GM12878 (cell line): ENCODE measurements at regions of chr19 and their contacts with region 1.

Region 1: DNA sequence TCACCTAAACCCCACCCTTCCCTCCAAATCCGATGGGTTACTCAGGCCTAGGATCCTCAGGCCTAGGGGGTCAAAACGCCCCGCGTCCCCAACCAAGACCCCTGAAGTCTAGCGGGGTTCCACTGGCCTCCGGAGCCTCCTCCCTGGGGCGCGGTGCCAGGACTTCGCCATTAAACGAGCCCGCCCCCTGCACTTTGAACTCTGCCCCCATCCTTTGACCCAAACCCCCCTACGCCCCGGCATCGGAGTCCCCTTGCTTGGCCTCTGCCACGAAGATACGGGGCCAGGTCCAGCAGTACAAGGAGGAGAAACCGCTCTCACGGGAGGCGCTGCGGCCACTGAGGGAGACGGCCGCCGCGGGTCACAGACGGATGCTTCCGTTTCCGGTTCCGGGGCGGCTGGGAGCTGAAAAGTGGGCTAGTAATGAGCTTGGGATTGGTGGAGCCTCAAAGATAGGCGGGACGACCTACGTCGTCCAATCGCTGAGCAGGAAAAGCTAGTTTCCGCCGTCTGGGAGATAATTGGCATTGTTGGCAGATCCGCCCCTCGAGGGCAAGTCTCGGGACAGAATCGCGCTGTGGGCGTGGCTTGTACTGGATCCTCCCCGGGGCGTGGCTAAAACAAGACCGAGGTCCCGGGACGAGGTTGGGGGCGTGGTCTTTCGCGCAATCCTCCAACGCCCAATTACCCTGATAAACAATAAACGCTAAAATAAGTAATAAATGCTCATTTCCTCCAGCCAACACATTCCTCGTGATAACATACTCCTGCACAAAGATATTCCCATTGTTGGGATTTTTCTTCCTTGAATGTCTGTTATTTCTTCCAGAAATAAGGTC is 5.7 kb upstream of the ZNF77 start:
- DNase-seq: peak; percentile 99
- ATAC-seq: peak; percentile 99
- H3K4me3 ChIP-seq: peak overlapping the region; percentile 83
- H3K27ac ChIP-seq: peak overlapping the region; percentile 85
- H3K4me1 ChIP-seq: peaks cover 3% of the 10 kb centered on the region
- H3K27me3 ChIP-seq: no peaks in the 10 kb centered on the region
- CTCF ChIP-seq: no peak
- EP300 ChIP-seq: no peak
- POLR2A ChIP-seq: peak; percentile 97
- RAD21 ChIP-seq: no peak

Region 2: GRCh38 chr19:2887391-2887914 is 63.1 kb before region 1 on chr19:
- CTCF ChIA-PET with region 1: interaction called, 29 read pairs
- POLR2A ChIA-PET with region 1: no interaction called
- RAD21 ChIA-PET with region 1: interaction called, 7 read pairs
- SMC1A ChIA-PET with region 1: interaction called, 9 read pairs
- in situ Hi-C with region 1: no loop called
- intact Hi-C with region 1: loop called (anchors 10 kb)
- DNase-seq: no peak
- ATAC-seq: peak; percentile 89
- H3K4me3 ChIP-seq: no peak overlapping the region
- H3K27ac ChIP-seq: no peak overlapping the region
- H3K4me1 ChIP-seq: peaks cover 3% of the 10 kb centered on the region; the same call in 1 of the 2 replicates
- H3K27me3 ChIP-seq: no peaks in the 10 kb centered on the region
- CTCF ChIP-seq: peak; percentile 61 to 65 (median 61)
- EP300 ChIP-seq: no peak
- POLR2A ChIP-seq: no peak
- RAD21 ChIP-seq: peak; percentile 60

Region 3: GRCh38 chr19:2969104-2969504 is 18.6 kb after region 1 on chr19:
- CTCF ChIA-PET with region 1: interaction called, 32 read pairs
- POLR2A ChIA-PET with region 1: no interaction called
- RAD21 ChIA-PET with region 1: interaction called, 4 read pairs
- SMC1A ChIA-PET with region 1: no interaction called
- in situ Hi-C with region 1: no loop called
- intact Hi-C with region 1: no loop called
- DNase-seq: no peak
- ATAC-seq: no peak
- H3K4me3 ChIP-seq: no peak overlapping the region
- H3K27ac ChIP-seq: no peak overlapping the region
- H3K4me1 ChIP-seq: peaks cover 4% of the 10 kb centered on the region; the same call in 1 of the 2 replicates
- H3K27me3 ChIP-seq: no peaks in the 10 kb centered on the region; a peak in 1 of 4 replicates
- CTCF ChIP-seq: no peak
- EP300 ChIP-seq: no peak
- POLR2A ChIP-seq: no peak
- RAD21 ChIP-seq: no peak

Region 4: DNA sequence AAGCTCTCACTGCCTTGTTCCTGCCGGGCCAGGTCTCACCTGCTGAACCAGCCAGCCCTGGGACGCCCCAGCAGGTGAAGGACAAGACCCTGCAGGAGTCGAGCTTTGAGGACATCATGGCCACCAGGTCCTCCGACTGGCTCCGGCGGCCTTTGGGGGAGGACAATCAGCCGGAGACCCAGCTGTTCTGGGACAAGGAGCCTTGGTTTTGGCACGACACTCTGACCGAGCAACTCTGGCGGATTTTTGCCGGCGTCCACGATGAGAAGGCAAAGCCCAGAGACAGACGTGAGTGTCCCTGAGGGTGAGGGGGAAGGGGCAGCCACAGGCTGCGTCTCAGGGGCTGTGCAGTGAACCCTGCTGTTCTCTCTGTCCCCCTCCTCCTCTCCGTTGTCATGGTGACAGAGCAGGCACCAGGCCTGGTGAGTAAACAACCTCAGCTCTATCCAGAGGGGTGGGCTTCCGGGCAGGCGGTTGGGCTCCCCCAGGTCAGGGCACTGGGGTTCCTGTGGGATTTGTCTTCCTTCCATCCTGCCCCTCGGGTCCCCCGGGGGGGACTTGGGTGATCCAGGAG is 36.5 kb after region 1 on chr19:
- CTCF ChIA-PET with region 1: no interaction called
- POLR2A ChIA-PET with region 1: no interaction called
- RAD21 ChIA-PET with region 1: no interaction called
- SMC1A ChIA-PET with region 1: no interaction called
- in situ Hi-C with region 1: no loop called
- intact Hi-C with region 1: no loop called
- DNase-seq: no peak
- ATAC-seq: no peak
- H3K4me3 ChIP-seq: no peak overlapping the region
- H3K27ac ChIP-seq: no peak overlapping the region
- H3K4me1 ChIP-seq: peaks cover 6% of the 10 kb centered on the region; the same call in 1 of the 2 replicates
- H3K27me3 ChIP-seq: no peaks in the 10 kb centered on the region; a peak in 2 of 4 replicates
- CTCF ChIP-seq: no peak
- EP300 ChIP-seq: no peak
- POLR2A ChIP-seq: no peak
- RAD21 ChIP-seq: no peak

Region 5: DNA sequence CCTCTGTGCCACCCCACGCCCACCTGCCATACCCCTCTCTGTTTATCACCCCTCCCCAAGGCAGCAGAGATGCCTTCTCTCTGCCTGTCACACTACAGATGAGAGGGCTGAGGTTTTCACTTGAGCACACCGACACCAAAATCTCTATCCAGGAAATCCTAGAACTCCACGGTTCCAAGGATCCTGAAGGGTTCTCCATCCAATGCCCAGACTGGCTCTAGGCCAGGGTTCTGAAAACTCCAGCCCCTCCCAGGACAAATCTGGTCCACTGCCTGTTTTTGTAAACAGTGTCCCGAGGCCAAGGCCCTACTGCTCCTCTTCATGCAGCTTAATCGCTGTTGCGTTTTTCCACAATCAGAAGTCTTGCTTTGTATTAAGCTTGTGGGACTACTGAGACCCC is 58.5 kb after region 1 on chr19:
- CTCF ChIA-PET with region 1: no interaction called
- POLR2A ChIA-PET with region 1: no interaction called
- RAD21 ChIA-PET with region 1: no interaction called
- SMC1A ChIA-PET with region 1: no interaction called
- in situ Hi-C with region 1: no loop called
- intact Hi-C with region 1: no loop called
- DNase-seq: no peak
- ATAC-seq: no peak
- H3K4me3 ChIP-seq: no peak overlapping the region
- H3K27ac ChIP-seq: no peak overlapping the region
- H3K4me1 ChIP-seq: no peaks in the 10 kb centered on the region; the same call in none of the 2 replicates
- H3K27me3 ChIP-seq: no peaks in the 10 kb centered on the region; a peak in 1 of 4 replicates
- CTCF ChIP-seq: no peak
- EP300 ChIP-seq: no peak
- POLR2A ChIP-seq: no peak
- RAD21 ChIP-seq: no peak

Region 6: DNA sequence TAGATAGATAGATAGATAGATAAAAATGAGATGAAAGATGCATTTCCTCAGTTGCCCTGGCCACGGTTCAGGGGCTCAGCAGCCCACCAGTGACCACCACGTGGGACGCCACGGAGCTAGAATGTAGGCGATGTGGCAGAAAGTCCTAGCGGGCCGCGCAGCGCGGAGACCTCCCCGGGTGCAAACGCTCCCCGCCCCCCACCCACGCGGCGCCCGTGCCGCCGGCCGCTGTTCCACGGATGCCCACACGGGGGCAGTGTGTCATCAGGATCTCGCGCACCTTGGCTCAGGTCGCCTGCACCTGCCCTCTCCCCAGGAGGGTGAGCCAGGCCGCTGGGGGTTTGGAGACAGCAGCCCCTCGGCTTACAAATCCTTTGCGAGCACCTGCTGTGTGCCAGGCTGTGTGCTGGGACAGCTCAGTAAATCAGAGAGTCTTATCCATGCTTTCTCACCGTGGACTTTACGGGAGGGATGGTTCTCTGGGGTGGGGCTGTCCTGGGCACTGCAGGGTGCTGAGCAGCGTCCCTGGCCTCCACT is 125.5 kb after region 1 on chr19:
- CTCF ChIA-PET with region 1: interaction called, 23 read pairs
- POLR2A ChIA-PET with region 1: no interaction called
- RAD21 ChIA-PET with region 1: interaction called, 7 read pairs
- SMC1A ChIA-PET with region 1: interaction called, 5 read pairs
- in situ Hi-C with region 1: no loop called
- intact Hi-C with region 1: no loop called
- DNase-seq: no peak
- ATAC-seq: peak; percentile 93
- H3K4me3 ChIP-seq: no peak overlapping the region
- H3K27ac ChIP-seq: no peak overlapping the region
- H3K4me1 ChIP-seq: no peaks in the 10 kb centered on the region
- H3K27me3 ChIP-seq: no peaks in the 10 kb centered on the region
- CTCF ChIP-seq: peak; percentile 81 to 97 (median 92)
- EP300 ChIP-seq: no peak
- POLR2A ChIP-seq: no peak
- RAD21 ChIP-seq: peak; percentile 88

Region 7: GRCh38 chr19:3108775-3109174 is 158.3 kb after region 1 on chr19:
- CTCF ChIA-PET with region 1: interaction called, 43 read pairs
- POLR2A ChIA-PET with region 1: no interaction called
- RAD21 ChIA-PET with region 1: interaction called, 10 read pairs
- SMC1A ChIA-PET with region 1: interaction called, 11 read pairs
- in situ Hi-C with region 1: no loop called
- intact Hi-C with region 1: no loop called
- DNase-seq: no peak
- ATAC-seq: peak; percentile 96
- H3K4me3 ChIP-seq: no peak overlapping the region
- H3K27ac ChIP-seq: no peak overlapping the region
- H3K4me1 ChIP-seq: no peaks in the 10 kb centered on the region
- H3K27me3 ChIP-seq: no peaks in the 10 kb centered on the region
- CTCF ChIP-seq: peak; percentile 79 to 93 (median 88)
- EP300 ChIP-seq: no peak
- POLR2A ChIP-seq: no peak
- RAD21 ChIP-seq: peak; percentile 59

Region 8: GRCh38 chr19:3176603-3177501 is 226.3 kb after region 1 on chr19:
- CTCF ChIA-PET with region 1: no interaction called
- POLR2A ChIA-PET with region 1: no interaction called
- RAD21 ChIA-PET with region 1: no interaction called
- SMC1A ChIA-PET with region 1: no interaction called
- in situ Hi-C with region 1: no loop called
- intact Hi-C with region 1: no loop called
- DNase-seq: no peak
- ATAC-seq: peak; percentile 5; the same call in 1 of the 3 replicates
- H3K4me3 ChIP-seq: peak overlapping the region; percentile 29; the same call in 1 of the 2 replicates
- H3K27ac ChIP-seq: peak overlapping the region; percentile 69
- H3K4me1 ChIP-seq: peaks cover 22% of the 10 kb centered on the region
- H3K27me3 ChIP-seq: no peaks in the 10 kb centered on the region
- CTCF ChIP-seq: no peak
- EP300 ChIP-seq: no peak
- POLR2A ChIP-seq: 0 out of 2 replicates have a peak, but pooled peaks have one; percentile 5
- RAD21 ChIP-seq: no peak